OCI-LY7 (cell line): ENCODE measurements at regions of chr12 and their contacts with region 1.

Region 1: GRCh38 chr12:15882118-15882971 is at the start of gene STRAP:
- DNase-seq: peak; percentile 94
- H3K4me3 ChIP-seq: peak within 1 kb of the TSS; percentile 94
- H3K27ac ChIP-seq: peak within 1 kb of the TSS; percentile 66
- H3K4me1 ChIP-seq: peaks cover 18% of the 10 kb centered on the region
- CTCF ChIP-seq: no peak
- total RNA-seq, gene STRAP: 43.1 and 45.5 TPM in 2 replicates

Region 2: DNA sequence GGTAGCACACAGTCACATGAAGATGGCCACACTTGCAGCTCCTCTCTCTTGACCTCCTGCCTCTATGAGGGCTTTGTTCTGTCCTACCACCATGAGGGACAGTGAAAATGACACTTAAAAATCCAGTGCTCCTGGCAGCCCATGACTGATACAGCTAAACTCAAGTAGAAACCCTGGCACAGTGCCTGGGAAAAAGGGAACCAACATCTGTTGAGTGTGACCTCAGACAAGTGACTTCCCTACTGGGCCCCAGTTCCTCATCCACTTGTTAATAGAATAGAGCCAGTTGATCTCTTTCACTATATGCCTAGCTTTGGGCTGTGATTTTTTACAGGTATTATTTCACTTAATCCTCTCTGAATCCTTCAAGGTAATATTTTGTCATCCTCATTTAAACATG is 1190.8 kb before region 1 on chr12:
- CTCF ChIA-PET with region 1: no interaction called
- POLR2A ChIA-PET with region 1: no interaction called
- intact Hi-C with region 1: no loop called
- DNase-seq: no peak
- H3K4me3 ChIP-seq: no peak overlapping the region
- H3K27ac ChIP-seq: no peak overlapping the region
- H3K4me1 ChIP-seq: no peaks in the 10 kb centered on the region
- CTCF ChIP-seq: no peak

Region 3: DNA sequence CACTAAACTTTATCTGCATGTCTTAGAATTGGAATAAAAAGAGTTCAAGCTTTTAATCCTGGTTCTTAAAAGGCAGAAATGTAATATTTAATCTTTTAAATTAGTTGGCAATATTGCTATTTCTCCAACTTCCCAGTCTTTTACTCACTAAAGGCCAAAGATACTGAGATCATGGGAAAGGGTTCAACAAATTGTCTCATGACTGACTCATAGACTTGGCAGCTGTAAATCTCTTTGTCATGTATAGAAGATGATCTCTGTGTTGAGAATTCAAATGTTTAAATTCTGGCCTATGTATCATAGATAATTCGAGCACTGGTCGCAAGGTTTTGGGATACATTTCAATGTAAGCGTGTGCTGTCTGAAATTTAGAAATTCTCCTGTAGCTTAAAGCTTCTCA is 40.2 kb before region 1 on chr12:
- CTCF ChIA-PET with region 1: no interaction called
- POLR2A ChIA-PET with region 1: no interaction called
- intact Hi-C with region 1: no loop called
- DNase-seq: no peak
- H3K4me3 ChIP-seq: no peak overlapping the region
- H3K27ac ChIP-seq: no peak overlapping the region
- H3K4me1 ChIP-seq: no peaks in the 10 kb centered on the region
- CTCF ChIP-seq: no peak

Region 4: GRCh38 chr12:15910864-15911721 is 28.7 kb after region 1 on chr12 and contains the start of gene DERA:
- CTCF ChIA-PET with region 1: no interaction called
- POLR2A ChIA-PET with region 1: interaction called, 25 read pairs
- intact Hi-C with region 1: no loop called
- DNase-seq: peak; percentile 63
- H3K4me3 ChIP-seq: peak within 1 kb of the TSS; percentile 83
- H3K27ac ChIP-seq: peak within 1 kb of the TSS; percentile 44
- H3K4me1 ChIP-seq: peaks cover 13% of the 10 kb centered on the region
- CTCF ChIP-seq: peak; percentile 22; the same call in 1 of the 2 replicates
- total RNA-seq, gene DERA: 54.9 and 68.6 TPM in 2 replicates

Region 5: GRCh38 chr12:15996254-15996653 is 113.9 kb after region 1 on chr12:
- CTCF ChIA-PET with region 1: no interaction called
- POLR2A ChIA-PET with region 1: no interaction called
- intact Hi-C with region 1: loop called (anchors 5 kb)
- DNase-seq: no peak
- H3K4me3 ChIP-seq: no peak overlapping the region
- H3K27ac ChIP-seq: no peak overlapping the region
- H3K4me1 ChIP-seq: peaks cover 13% of the 10 kb centered on the region
- CTCF ChIP-seq: peak; percentile 60